GM10248 (cell line): ENCODE measurements at regions of chr19 and their contacts with region 1.

Region 1: DNA sequence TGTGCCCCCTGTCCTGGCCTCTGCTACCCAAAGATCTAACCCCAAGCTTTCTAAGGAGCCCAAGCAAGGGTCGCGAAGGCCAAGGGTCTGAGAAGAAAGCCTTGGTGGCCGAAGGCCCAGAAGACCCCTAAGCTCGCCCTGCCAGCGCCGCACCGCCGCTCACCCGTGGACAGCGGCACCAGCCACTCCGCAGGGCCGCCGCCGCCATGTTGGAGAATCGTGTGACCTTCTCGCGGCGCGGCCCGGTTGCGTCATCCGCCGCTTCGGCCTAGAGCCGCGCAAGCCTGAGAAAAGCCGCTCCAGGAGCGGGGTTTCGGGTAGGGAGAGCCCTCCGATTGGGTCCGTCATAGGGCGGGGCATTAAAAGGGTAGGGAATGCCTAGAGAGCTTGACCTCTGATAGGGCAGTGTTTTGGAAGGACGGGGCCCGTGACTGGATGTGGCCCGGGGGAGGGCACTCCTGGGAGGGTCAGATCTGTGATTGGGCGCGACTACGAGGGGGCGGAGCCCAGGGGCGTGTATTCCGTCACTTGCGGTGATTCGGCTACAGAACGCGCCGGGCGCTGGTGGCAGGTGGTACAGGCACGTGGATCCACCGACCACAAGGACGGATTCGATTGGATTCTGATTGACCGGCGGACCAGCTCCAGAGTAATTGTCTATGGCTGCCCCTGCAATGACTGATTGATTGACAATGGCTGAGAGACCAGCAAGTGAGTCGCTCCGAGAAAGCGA is at the start of gene TIMM44:
- DNase-seq: peak; percentile 99
- CTCF ChIP-seq: no peak

Region 2: DNA sequence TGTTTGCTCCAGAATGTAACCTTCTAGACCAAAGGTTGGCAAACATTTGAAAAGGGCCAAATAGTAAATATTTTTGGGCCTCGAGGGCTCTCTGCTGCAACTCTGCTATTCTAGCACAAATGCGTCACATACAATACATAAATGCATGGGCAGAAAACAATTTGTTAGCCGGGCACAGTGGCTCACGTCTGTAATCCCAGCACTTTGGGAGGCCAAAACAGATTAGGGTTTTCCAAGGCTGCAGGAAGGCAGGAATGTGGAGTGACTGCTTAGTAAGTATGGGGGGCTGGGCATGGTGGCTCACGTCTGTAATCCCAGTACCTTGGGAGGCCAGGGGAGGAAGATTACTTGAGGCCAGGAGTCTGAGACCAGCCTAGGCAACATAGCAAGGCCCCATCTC is 135.5 kb before region 1 on chr19:
- CTCF ChIA-PET with region 1: no interaction called
- POLR2A ChIA-PET with region 1: no interaction called
- DNase-seq: no peak
- CTCF ChIP-seq: no peak

Region 3: GRCh38 chr19:7903244-7904073 is 40.2 kb before region 1 on chr19 and contains the start of gene MAP2K7:
- CTCF ChIA-PET with region 1: interaction called, 11 read pairs
- POLR2A ChIA-PET with region 1: interaction called, 9 read pairs
- DNase-seq: peak; percentile 100
- CTCF ChIP-seq: peak; percentile 92

Region 4: DNA sequence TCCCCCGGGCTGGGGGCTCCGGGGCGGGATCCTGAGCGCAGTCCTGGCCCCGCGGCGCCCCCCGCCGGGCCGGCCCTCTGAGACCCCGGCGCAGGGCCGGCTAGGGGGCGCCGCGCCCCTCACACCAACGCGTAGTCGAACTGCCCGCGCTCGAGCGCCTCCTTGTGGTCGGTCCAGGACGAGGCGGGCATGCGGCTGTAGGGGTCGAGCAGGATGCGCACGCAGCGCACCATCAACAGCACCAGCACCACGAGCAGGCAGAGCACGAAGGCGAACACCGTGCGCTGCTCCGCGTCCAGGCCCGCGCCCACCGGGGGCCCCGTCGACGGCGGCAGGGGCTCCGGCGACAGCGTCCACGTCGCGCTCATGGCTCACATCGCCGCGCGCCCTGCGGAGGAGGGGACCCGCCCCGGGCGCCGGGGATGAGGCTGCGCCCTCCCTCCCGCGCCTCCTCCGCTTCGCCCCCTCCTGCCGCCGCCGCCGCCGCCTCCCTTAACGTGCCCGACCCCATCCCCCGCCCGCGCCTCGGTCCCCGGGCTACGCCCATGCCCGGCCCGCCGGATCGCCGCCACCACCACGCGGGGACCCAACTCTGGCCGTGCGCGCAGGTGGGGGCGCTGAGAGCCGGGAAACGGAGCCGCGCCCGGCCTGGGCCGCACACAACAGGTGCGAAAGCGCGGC is 18.3 kb before region 1 on chr19:
- CTCF ChIA-PET with region 1: interaction called, 90 read pairs
- POLR2A ChIA-PET with region 1: interaction called, 18 read pairs
- DNase-seq: peak; percentile 82
- CTCF ChIP-seq: peak; percentile 89

Region 5: DNA sequence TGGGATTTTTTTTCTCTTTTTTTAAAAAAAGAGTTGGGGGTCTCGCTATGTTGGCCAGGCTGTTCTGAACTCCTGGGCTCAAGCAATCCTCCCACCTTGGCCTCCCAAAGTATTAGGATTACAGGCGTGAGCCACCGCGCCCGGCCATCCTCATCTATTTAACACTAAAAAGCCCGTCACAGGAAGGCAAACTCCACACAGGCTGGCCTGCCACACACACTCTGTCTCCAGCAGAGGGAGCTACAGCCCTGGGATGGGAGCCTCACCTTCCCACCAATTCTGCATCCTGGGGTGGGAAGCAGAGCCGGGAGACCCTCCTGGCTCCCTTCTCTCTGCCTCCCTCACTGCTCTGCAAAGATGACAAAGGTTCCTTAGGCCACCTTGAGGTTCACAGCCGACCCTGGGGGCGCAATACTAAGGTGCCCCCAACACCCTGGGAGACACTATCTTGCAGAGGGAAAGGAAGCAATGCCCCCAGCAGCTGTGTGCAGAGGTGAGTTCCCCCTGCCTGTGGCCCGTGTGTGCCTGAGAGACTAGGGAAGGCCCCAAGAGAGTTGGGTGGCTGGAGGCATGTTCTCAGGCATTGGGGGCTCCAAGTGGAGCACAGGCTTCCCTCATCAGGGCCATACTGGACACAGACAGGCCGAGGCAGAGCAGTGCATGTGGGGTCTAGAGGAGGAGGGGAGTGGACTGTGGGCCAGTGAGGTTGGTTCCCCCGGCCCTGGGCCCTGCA is 27.3 kb after region 1 on chr19:
- CTCF ChIA-PET with region 1: interaction called, 30 read pairs
- POLR2A ChIA-PET with region 1: no interaction called
- DNase-seq: peak; percentile 60
- CTCF ChIP-seq: peak; percentile 71

Region 6: GRCh38 chr19:8129060-8129459 is 185.4 kb after region 1 on chr19:
- CTCF ChIA-PET with region 1: no interaction called
- POLR2A ChIA-PET with region 1: no interaction called
- DNase-seq: no peak
- CTCF ChIP-seq: no peak